ENCODE measurements at regions of chr2 and their contacts with region 1.

Region 1: DNA sequence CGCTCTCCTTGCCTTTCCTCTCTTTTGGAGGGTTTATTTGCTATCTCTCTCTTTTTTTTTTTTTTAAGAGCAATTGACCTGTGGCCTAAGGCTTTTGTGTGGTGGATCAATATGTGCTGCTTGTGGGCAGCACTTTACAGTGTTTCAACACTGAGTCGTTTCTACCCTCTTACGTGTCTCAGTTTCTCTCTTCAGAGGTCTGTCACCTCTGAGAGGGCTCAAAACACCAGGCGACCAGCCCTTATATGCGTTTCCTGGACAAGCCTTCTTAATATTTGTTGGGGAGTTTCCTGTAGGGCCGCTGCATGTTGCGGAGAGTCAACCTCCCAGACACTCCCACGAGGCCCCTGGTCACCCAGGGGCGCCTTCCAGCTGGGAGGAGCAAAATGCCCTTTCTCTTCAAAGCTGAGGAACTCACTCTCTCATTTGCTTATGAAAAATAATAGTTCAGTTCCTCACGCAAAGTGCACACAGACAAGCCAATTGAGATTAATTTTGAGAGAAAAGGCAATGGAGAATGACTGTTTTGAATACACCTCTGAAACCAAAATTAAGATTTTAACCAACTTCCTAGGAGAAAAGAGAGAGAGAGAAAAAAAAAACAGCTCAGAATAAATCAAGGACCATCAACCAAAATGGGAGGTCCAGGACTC is 96.3 kb upstream of the B3GNT2 start:
- DNase-seq: peak; percentile 80
- ATAC-seq: peak; percentile 96
- H3K4me3 ChIP-seq: peak overlapping the region; percentile 53
- H3K27ac ChIP-seq: peak overlapping the region; percentile 95
- H3K4me1 ChIP-seq: peaks cover 43% of the 10 kb centered on the region
- H3K27me3 ChIP-seq: no peaks in the 10 kb centered on the region
- CTCF ChIP-seq: no peak
- EP300 ChIP-seq: peak; percentile 13 to 16; a peak in 1 of 4 replicates
- POLR2A ChIP-seq: no peak
- RAD21 ChIP-seq: no peak

Region 2: DNA sequence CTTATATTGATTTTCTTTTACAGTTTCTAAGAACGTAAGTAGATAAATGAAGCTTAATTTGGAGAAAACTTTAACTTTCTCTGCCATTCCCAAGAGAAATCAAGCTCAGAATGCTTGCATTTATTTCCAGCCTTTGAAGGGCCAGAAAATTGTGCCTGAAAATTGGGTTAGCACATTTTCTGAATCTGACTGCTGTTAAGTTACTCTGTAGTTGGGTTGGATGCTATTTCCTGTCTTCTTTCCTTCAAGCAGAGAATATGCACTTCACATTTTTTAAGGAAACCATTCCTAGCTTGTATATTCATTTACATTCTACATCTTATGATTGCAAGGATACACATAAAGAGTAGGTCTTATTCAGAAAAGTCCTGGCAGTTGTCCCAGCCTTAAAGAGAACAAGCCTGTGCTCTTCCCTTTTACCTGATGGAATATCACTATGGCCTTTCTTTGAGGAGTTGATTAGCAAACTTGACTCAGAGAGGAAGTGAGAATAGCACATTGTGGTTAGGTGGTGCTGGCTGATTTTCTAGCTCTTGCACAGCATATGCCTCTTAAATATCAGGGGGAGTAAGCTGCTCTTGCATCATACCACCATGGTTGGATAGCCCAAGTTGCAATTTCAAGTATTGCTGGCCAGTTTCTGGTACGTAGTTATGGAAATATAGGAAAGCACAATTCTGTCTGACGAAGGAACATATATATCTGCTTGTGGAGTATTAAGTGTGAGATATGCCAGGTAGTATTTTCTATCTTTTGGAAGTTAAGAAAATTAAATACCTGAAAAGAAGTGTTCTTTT is 60.5 kb before region 1 on chr2:
- CTCF ChIA-PET with region 1: interaction called, 4 read pairs
- POLR2A ChIA-PET with region 1: interaction called, 8 read pairs
- RAD21 ChIA-PET with region 1: interaction called, 22 read pairs
- SMC1A ChIA-PET with region 1: interaction called, 27 read pairs
- in situ Hi-C with region 1: no loop called
- intact Hi-C with region 1: loop called (anchors 2 kb)
- DNase-seq: peak; percentile 98
- ATAC-seq: peak; percentile 99
- H3K4me3 ChIP-seq: peak overlapping the region; percentile 16; the same call in 1 of the 2 replicates
- H3K27ac ChIP-seq: peak overlapping the region; percentile 71
- H3K4me1 ChIP-seq: peaks cover 25% of the 10 kb centered on the region
- H3K27me3 ChIP-seq: no peaks in the 10 kb centered on the region
- CTCF ChIP-seq: no peak
- EP300 ChIP-seq: peak; percentile 91 to 100
- POLR2A ChIP-seq: no peak
- RAD21 ChIP-seq: peak; percentile 33; the same call in 1 of the 2 replicates

Region 3: DNA sequence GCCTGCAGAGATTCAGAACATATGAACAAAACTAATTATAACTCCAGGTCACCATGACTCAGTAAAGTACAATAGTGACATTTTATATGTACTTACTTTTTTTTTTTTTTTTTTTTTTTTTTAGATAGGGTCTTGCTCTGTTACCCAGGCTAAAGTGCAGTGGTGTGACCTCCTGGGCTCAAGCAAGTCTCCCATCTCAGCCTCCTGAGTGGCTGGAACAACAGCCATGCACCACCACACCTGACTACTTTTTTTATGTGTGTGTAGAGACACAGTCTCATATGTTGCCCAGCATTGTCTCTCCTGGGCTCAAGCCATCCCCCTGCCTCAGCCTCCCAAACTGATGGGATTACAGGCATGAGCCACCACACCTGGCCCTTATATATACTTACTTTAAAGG is 34.4 kb before region 1 on chr2:
- CTCF ChIA-PET with region 1: interaction called, 14 read pairs
- POLR2A ChIA-PET with region 1: interaction called, 6 read pairs
- RAD21 ChIA-PET with region 1: interaction called, 20 read pairs
- SMC1A ChIA-PET with region 1: interaction called, 15 read pairs
- in situ Hi-C with region 1: no loop called
- intact Hi-C with region 1: no loop called
- DNase-seq: no peak
- ATAC-seq: peak; percentile 56
- H3K4me3 ChIP-seq: peak overlapping the region; percentile 11; the same call in 1 of the 2 replicates
- H3K27ac ChIP-seq: peak overlapping the region; percentile 81
- H3K4me1 ChIP-seq: peaks cover 37% of the 10 kb centered on the region
- H3K27me3 ChIP-seq: no peaks in the 10 kb centered on the region
- CTCF ChIP-seq: no peak
- EP300 ChIP-seq: no peak
- POLR2A ChIP-seq: no peak
- RAD21 ChIP-seq: no peak

Region 4: GRCh38 chr2:62118160-62118559 is 18.5 kb after region 1 on chr2:
- CTCF ChIA-PET with region 1: interaction called, 6 read pairs
- POLR2A ChIA-PET with region 1: interaction called, 6 read pairs
- RAD21 ChIA-PET with region 1: no interaction called
- SMC1A ChIA-PET with region 1: interaction called, 26 read pairs
- in situ Hi-C with region 1: no loop called
- intact Hi-C with region 1: no loop called
- DNase-seq: no peak
- ATAC-seq: no peak
- H3K4me3 ChIP-seq: no peak overlapping the region
- H3K27ac ChIP-seq: peak overlapping the region; percentile 22; the same call in 1 of the 2 replicates
- H3K4me1 ChIP-seq: peaks cover 48% of the 10 kb centered on the region
- H3K27me3 ChIP-seq: no peaks in the 10 kb centered on the region
- CTCF ChIP-seq: no peak
- EP300 ChIP-seq: no peak
- POLR2A ChIP-seq: no peak
- RAD21 ChIP-seq: no peak

Region 5: DNA sequence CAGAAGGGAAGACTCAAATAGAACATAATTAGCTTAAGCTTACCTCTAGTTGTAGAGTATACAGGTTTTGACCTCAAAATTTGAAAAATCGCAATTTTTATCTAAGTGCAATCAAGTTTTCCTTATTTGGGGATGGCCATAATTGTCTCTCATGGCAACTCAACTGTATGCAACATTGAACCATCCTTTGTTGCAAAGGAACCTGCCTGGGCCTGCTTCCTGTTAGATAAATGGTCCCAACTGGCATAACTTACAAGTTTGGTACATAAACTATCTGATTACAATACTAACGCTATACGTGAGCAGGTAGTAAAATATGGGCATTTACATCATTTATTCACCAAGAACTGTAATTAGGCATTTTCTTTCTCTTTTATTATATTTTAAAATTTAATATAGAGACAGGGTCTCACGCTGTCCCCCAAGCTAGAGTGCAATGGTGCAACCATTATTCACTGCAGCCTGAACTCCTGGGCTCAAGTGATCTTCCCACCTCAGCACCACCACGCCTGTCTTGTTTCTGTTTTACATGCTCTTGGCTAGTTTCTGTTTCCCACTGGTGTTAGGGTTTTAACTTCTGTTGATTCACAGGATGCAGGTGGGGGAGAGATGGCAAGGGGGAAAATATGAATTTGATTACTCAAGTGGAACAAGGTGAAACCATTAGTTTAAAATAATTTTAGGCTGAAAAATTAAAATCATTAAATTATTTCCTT is 40.9 kb after region 1 on chr2:
- CTCF ChIA-PET with region 1: interaction called, 4 read pairs
- POLR2A ChIA-PET with region 1: interaction called, 4 read pairs
- RAD21 ChIA-PET with region 1: interaction called, 40 read pairs
- SMC1A ChIA-PET with region 1: interaction called, 59 read pairs
- in situ Hi-C with region 1: no loop called
- intact Hi-C with region 1: loop called (anchors 1 kb)
- DNase-seq: peak; percentile 85
- ATAC-seq: peak; percentile 68
- H3K4me3 ChIP-seq: no peak overlapping the region
- H3K27ac ChIP-seq: peak overlapping the region; percentile 90
- H3K4me1 ChIP-seq: peaks cover 62% of the 10 kb centered on the region
- H3K27me3 ChIP-seq: no peaks in the 10 kb centered on the region
- CTCF ChIP-seq: no peak
- EP300 ChIP-seq: peak in 1 of 2 experiments; percentile 45; a peak in 1 of 4 replicates
- POLR2A ChIP-seq: no peak
- RAD21 ChIP-seq: peak; percentile 29; the same call in 1 of the 2 replicates

Region 6: GRCh38 chr2:62195421-62196277 is 96.0 kb after region 1 on chr2 and contains the start of gene B3GNT2:
- CTCF ChIA-PET with region 1: no interaction called
- POLR2A ChIA-PET with region 1: interaction called, 10 read pairs
- RAD21 ChIA-PET with region 1: interaction called, 15 read pairs
- SMC1A ChIA-PET with region 1: interaction called, 8 read pairs
- in situ Hi-C with region 1: no loop called
- intact Hi-C with region 1: loop called (anchors 1 kb)
- DNase-seq: no peak
- ATAC-seq: peak; percentile 63
- H3K4me3 ChIP-seq: peak within 1 kb of the TSS; percentile 86
- H3K27ac ChIP-seq: peak within 1 kb of the TSS; percentile 87
- H3K4me1 ChIP-seq: peaks cover 9% of the 10 kb centered on the region
- H3K27me3 ChIP-seq: no peaks in the 10 kb centered on the region
- CTCF ChIP-seq: no peak
- EP300 ChIP-seq: no peak
- POLR2A ChIP-seq: peak; percentile 91
- RAD21 ChIP-seq: no peak
- polyA plus RNA-seq, gene B3GNT2: 19.7 to 36.5 TPM

Measured in GM12878 (cell line).